Common myeloid progenitor, CD34-positive (primary cell): ENCODE measurements at regions of chr14 and their contacts with region 1.

Region 1: GRCh38 chr14:91177073-91178034 is 63.5 kb downstream of the DGLUCY start:
- DNase-seq: peak; percentile 70 to 83 (median 78)
- H3K4me3 ChIP-seq: no peak overlapping the region
- H3K27ac ChIP-seq: peak overlapping the region in 1 of 2 experiments; percentile 47
- H3K4me1 ChIP-seq: peaks cover 0 to 4% (median 0%) of the 10 kb centered on the region in 4 experiments
- H3K27me3 ChIP-seq: no peaks in the 10 kb centered on the region

Region 2: GRCh38 chr14:90903101-90903500 is 274.3 kb before region 1 on chr14:
- CTCF ChIA-PET with region 1: interaction called, 118 read pairs
- POLR2A ChIA-PET with region 1: interaction called, 3 read pairs
- DNase-seq: peak; percentile 57 to 79 (median 73)
- H3K4me3 ChIP-seq: no peak overlapping the region
- H3K27ac ChIP-seq: no peak overlapping the region
- H3K4me1 ChIP-seq: no peaks in the 10 kb centered on the region
- H3K27me3 ChIP-seq: no peaks in the 10 kb centered on the region

Region 3: GRCh38 chr14:90968025-90968424 is 209.3 kb before region 1 on chr14:
- CTCF ChIA-PET with region 1: no interaction called
- POLR2A ChIA-PET with region 1: no interaction called
- DNase-seq: peak in 2 of 3 donors; percentile 46 to 51
- H3K4me3 ChIP-seq: no peak overlapping the region
- H3K27ac ChIP-seq: no peak overlapping the region
- H3K4me1 ChIP-seq: peaks cover 2 to 26% (median 9%) of the 10 kb centered on the region in 4 experiments
- H3K27me3 ChIP-seq: no peaks in the 10 kb centered on the region

Region 4: GRCh38 chr14:91009501-91010152 is 167.7 kb before region 1 on chr14:
- CTCF ChIA-PET with region 1: no interaction called
- POLR2A ChIA-PET with region 1: no interaction called
- DNase-seq: peak; percentile 71 to 93 (median 90)
- H3K4me3 ChIP-seq: peak overlapping the region in 1 of 7 experiments; percentile 56
- H3K27ac ChIP-seq: no peak overlapping the region
- H3K4me1 ChIP-seq: peaks cover 16 to 48% (median 29%) of the 10 kb centered on the region in 4 experiments
- H3K27me3 ChIP-seq: no peaks in the 10 kb centered on the region

Region 5: GRCh38 chr14:91060351-91061055 is 116.9 kb before region 1 on chr14 and contains the start of gene RPS6KA5:
- CTCF ChIA-PET with region 1: interaction called, 20 read pairs
- POLR2A ChIA-PET with region 1: no interaction called
- DNase-seq: peak; percentile 100
- H3K4me3 ChIP-seq: peak within 1 kb of the TSS; percentile 80 to 100 (median 92)
- H3K27ac ChIP-seq: peak within 1 kb of the TSS; percentile 89 to 95
- H3K4me1 ChIP-seq: peaks cover 23 to 49% (median 37%) of the 10 kb centered on the region in 4 experiments
- H3K27me3 ChIP-seq: no peaks in the 10 kb centered on the region

Region 6: GRCh38 chr14:91149479-91149921 is 27.9 kb before region 1 on chr14:
- CTCF ChIA-PET with region 1: interaction called, 14 read pairs
- POLR2A ChIA-PET with region 1: no interaction called
- DNase-seq: peak; percentile 72 to 90 (median 88)
- H3K4me3 ChIP-seq: no peak overlapping the region
- H3K27ac ChIP-seq: no peak overlapping the region
- H3K4me1 ChIP-seq: peaks cover under 1 to 24% (median 18%) of the 10 kb centered on the region in 4 experiments
- H3K27me3 ChIP-seq: no peaks in the 10 kb centered on the region

Region 7: GRCh38 chr14:91164685-91165084 is 12.7 kb before region 1 on chr14:
- CTCF ChIA-PET with region 1: interaction called, 66 read pairs
- POLR2A ChIA-PET with region 1: no interaction called
- DNase-seq: no peak
- H3K4me3 ChIP-seq: no peak overlapping the region
- H3K27ac ChIP-seq: no peak overlapping the region
- H3K4me1 ChIP-seq: no peaks in the 10 kb centered on the region
- H3K27me3 ChIP-seq: no peaks in the 10 kb centered on the region

Region 8: GRCh38 chr14:91281346-91281745 is 104.0 kb after region 1 on chr14:
- CTCF ChIA-PET with region 1: interaction called, 170 read pairs
- POLR2A ChIA-PET with region 1: no interaction called
- DNase-seq: no peak
- H3K4me3 ChIP-seq: no peak overlapping the region
- H3K27ac ChIP-seq: no peak overlapping the region
- H3K4me1 ChIP-seq: peaks cover 0 to 10% (median 1%) of the 10 kb centered on the region in 4 experiments
- H3K27me3 ChIP-seq: no peaks in the 10 kb centered on the region